ENCODE measurements at regions of chr9 and their contacts with region 1.

Region 1: DNA sequence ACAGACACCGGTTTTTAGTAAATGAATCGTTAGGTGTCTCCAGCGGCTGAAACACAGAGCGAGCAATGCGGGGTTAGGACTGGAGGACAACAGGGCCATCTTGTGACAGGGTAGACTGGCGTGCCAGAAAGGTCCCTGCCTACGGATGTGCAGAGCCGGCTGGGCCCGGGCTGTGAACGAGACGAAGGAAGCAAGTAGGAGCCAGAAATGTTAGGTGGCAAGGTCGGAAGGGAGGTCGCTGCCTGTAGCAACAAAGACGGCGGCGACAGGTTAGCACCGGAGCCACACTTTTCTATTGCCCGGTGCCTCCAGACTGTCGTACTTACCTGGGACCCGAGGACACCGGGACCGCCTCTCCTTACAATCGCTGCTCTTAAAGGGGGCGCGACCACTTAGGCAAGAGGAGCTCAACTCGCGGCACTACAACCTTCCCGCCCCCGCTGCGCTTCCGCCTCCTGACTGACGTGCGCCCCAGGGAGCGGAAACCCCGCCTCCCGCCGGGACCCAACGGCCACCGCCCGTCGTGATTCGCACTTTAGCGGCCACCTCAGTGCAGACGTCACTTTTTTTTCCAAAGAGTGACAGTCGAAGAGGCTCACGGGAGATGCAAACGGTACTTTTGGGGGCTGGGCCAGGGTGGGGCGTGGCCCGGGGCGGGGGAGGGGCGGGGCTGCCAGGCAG is at the start of gene INIP:
- DNase-seq: peak; percentile 94 to 99
- H3K4me3 ChIP-seq: peak within 1 kb of the TSS; percentile 68 to 88 (median 82)
- H3K27ac ChIP-seq: peak within 1 kb of the TSS; percentile 65; the same call in 1 of the 2 replicates
- H3K4me1 ChIP-seq: no peaks in the 10 kb centered on the region
- H3K27me3 ChIP-seq: no peaks in the 10 kb centered on the region
- CTCF ChIP-seq: peak in 1 of 3 experiments; percentile 5; a peak in 2 of 4 replicates
- EP300 ChIP-seq: 0 out of 3 replicates have a peak, but pooled peaks of 1 of the 2 experiments have one; percentile 39
- POLR2A ChIP-seq: peak in 1 of 2 experiments; percentile 92; a peak in 2 of 3 replicates
- RAD21 ChIP-seq: peak; percentile 21 to 39; a peak in 3 of 4 replicates
- total RNA-seq, gene INIP: 16.4 and 18.3 TPM in 2 replicates

Region 2: GRCh38 chr9:112486221-112487007 is 231.4 kb before region 1 on chr9 and contains the start of gene KIAA1958:
- CTCF ChIA-PET with region 1: interaction called, 4 read pairs
- POLR2A ChIA-PET with region 1: interaction called, 10 read pairs
- DNase-seq: peak; percentile 66 to 83
- H3K4me3 ChIP-seq: peak within 1 kb of the TSS; percentile 91 to 97 (median 94)
- H3K27ac ChIP-seq: peak within 1 kb of the TSS; percentile 75
- H3K4me1 ChIP-seq: peaks cover 0 to 11% (median 5%) of the 10 kb centered on the region in 4 experiments; a peak in 3 of 7 replicates
- H3K27me3 ChIP-seq: no peaks in the 10 kb centered on the region
- CTCF ChIP-seq: no peak
- EP300 ChIP-seq: no peak
- POLR2A ChIP-seq: peak; percentile 79 to 97
- RAD21 ChIP-seq: peak in 1 of 2 experiments; percentile 16; a peak in 1 of 4 replicates
- total RNA-seq, gene KIAA1958: 39.9 and 43.8 TPM in 2 replicates

Region 3: GRCh38 chr9:112629671-112630485 is 87.9 kb before region 1 on chr9:
- CTCF ChIA-PET with region 1: no interaction called
- POLR2A ChIA-PET with region 1: no interaction called
- DNase-seq: no peak
- H3K4me3 ChIP-seq: no peak overlapping the region
- H3K27ac ChIP-seq: 0 out of 2 replicates have a peak overlapping the region, but pooled peaks have one; percentile 11
- H3K4me1 ChIP-seq: peaks cover 0 to 4% (median 0%) of the 10 kb centered on the region in 4 experiments; a peak in 2 of 7 replicates
- H3K27me3 ChIP-seq: no peaks in the 10 kb centered on the region
- CTCF ChIP-seq: no peak
- EP300 ChIP-seq: no peak
- POLR2A ChIP-seq: no peak
- RAD21 ChIP-seq: no peak

Region 4: GRCh38 chr9:112659906-112660305 is 57.9 kb before region 1 on chr9:
- CTCF ChIA-PET with region 1: no interaction called
- POLR2A ChIA-PET with region 1: no interaction called
- DNase-seq: no peak
- H3K4me3 ChIP-seq: no peak overlapping the region
- H3K27ac ChIP-seq: no peak overlapping the region
- H3K4me1 ChIP-seq: peaks cover 0 to 4% (median 0%) of the 10 kb centered on the region in 4 experiments; a peak in 2 of 7 replicates
- H3K27me3 ChIP-seq: no peaks in the 10 kb centered on the region
- CTCF ChIP-seq: no peak
- EP300 ChIP-seq: no peak
- POLR2A ChIP-seq: no peak
- RAD21 ChIP-seq: no peak

Region 5: GRCh38 chr9:112700085-112700484 is 17.7 kb before region 1 on chr9:
- CTCF ChIA-PET with region 1: no interaction called
- POLR2A ChIA-PET with region 1: no interaction called
- DNase-seq: no peak
- H3K4me3 ChIP-seq: no peak overlapping the region
- H3K27ac ChIP-seq: no peak overlapping the region
- H3K4me1 ChIP-seq: no peaks in the 10 kb centered on the region
- H3K27me3 ChIP-seq: no peaks in the 10 kb centered on the region
- CTCF ChIP-seq: no peak
- EP300 ChIP-seq: no peak
- POLR2A ChIP-seq: no peak
- RAD21 ChIP-seq: no peak

Region 6: DNA sequence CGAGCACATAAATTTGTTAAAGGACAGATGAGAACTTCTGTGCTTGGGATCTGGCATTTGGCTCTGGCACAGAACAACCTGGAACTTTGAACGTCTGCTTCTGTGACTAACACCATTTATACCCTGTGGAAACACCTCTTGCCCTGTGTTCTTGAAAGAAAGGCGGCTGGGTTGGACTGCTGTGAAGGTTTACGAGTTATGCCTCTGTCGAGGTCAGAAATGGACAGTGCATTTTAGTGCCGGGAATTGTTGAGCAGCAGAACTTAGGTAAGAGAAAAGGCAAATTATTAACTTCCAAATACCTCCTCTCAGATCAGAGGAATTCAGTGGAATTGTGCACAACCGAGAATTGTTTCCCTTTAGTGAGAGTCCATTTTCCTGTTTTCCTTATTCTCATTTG is 14.2 kb after region 1 on chr9:
- CTCF ChIA-PET with region 1: interaction called, 13 read pairs
- POLR2A ChIA-PET with region 1: interaction called, 6 read pairs
- DNase-seq: no peak
- H3K4me3 ChIP-seq: no peak overlapping the region
- H3K27ac ChIP-seq: no peak overlapping the region
- H3K4me1 ChIP-seq: no peaks in the 10 kb centered on the region
- H3K27me3 ChIP-seq: no peaks in the 10 kb centered on the region
- CTCF ChIP-seq: no peak
- EP300 ChIP-seq: no peak
- POLR2A ChIP-seq: no peak
- RAD21 ChIP-seq: no peak